ENCODE measurements at regions of chr5 and their contacts with region 1.

Region 1: GRCh38 chr5:57193757-57194413 is 20.0 kb downstream of the GPBP1 start:
- DNase-seq: peak in 2 of 9 experiments; percentile 35 to 60
- ATAC-seq: peak; percentile 80
- H3K4me3 ChIP-seq: no peak overlapping the region
- H3K4me3 Mint-ChIP-seq: peak overlapping the region; percentile 40
- H3K27ac ChIP-seq: peak overlapping the region in 1 of 2 experiments; percentile 36
- H3K27ac Mint-ChIP-seq: peak overlapping the region; percentile 34
- H3K4me1 ChIP-seq: peaks cover 58% of the 10 kb centered on the region
- H3K4me1 Mint-ChIP-seq: peaks cover 77% of the 10 kb centered on the region
- H3K27me3 ChIP-seq: no peaks in the 10 kb centered on the region
- H3K27me3 Mint-ChIP-seq: no peaks in the 10 kb centered on the region
- CTCF ChIP-seq: no peak

Region 2: DNA sequence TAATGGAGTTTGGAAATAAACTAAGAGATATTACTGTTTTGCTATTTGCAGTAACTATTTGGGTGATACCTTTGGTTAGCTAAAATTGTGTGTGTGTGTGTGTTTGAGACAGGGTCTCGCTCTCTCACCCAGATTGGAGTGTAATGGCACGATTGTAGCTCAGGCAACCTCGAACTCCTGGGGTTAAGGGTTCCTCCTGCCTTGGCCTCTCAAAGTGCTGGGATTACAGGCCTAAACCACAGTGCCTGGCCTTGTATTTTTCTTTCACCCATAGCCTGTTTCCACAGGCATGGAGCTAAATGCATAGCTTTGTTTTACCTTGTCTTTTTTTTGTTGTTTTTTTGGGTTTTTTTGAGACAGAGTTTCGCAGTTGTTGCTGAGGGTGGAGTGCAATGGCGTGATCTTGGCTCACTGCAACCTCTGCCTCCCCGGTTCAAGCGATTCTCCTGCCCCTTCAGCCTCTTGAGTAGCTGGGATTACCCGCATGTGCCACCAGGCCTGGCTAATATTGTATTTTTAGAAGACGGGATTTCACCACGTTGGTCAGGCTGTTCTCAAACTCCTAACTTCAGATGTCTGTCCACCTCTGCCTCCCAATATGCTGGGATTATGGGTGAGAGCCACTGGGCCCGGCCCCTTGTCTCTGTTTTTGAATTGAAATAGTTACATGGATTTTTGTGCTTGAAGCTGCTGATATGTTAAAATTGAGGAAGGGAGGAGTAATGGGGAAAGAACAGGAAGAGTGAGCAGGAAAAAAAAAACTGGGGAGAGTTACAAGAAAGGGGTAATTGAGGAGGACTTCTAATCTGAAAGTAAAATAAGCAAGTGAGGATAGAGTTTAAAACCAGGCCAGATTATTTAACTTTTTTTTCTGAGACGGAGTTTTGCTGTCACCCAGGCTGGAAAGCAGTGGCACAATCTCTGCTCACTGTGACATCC is 14.4 kb before region 1 on chr5:
- CTCF ChIA-PET with region 1: interaction called, 3 read pairs
- POLR2A ChIA-PET with region 1: interaction called, 4 read pairs
- intact Hi-C with region 1: loop called in 1 of 2 experiments (anchors 2 kb)
- DNase-seq: no peak
- ATAC-seq: no peak
- H3K4me3 ChIP-seq: peak overlapping the region; percentile 87 to 100
- H3K4me3 Mint-ChIP-seq: peak overlapping the region; percentile 96
- H3K27ac ChIP-seq: peak overlapping the region in 1 of 2 experiments; percentile 38
- H3K27ac Mint-ChIP-seq: peak overlapping the region; percentile 78
- H3K4me1 ChIP-seq: peaks cover 61% of the 10 kb centered on the region
- H3K4me1 Mint-ChIP-seq: peaks cover 75% of the 10 kb centered on the region
- H3K27me3 ChIP-seq: no peaks in the 10 kb centered on the region
- H3K27me3 Mint-ChIP-seq: no peaks in the 10 kb centered on the region
- CTCF ChIP-seq: no peak

Region 3: GRCh38 chr5:57267805-57268204 is 73.9 kb after region 1 on chr5:
- CTCF ChIA-PET with region 1: no interaction called
- POLR2A ChIA-PET with region 1: no interaction called
- intact Hi-C with region 1: no loop called
- DNase-seq: no peak
- ATAC-seq: no peak
- H3K4me3 ChIP-seq: no peak overlapping the region
- H3K4me3 Mint-ChIP-seq: no peak overlapping the region
- H3K27ac ChIP-seq: no peak overlapping the region
- H3K27ac Mint-ChIP-seq: no peak overlapping the region
- H3K4me1 ChIP-seq: no peaks in the 10 kb centered on the region
- H3K4me1 Mint-ChIP-seq: no peaks in the 10 kb centered on the region
- H3K27me3 ChIP-seq: no peaks in the 10 kb centered on the region
- H3K27me3 Mint-ChIP-seq: no peaks in the 10 kb centered on the region
- CTCF ChIP-seq: no peak

Measured in CD8-positive, alpha-beta T cell (primary cell).